Stomach (tissue), 19 donors: ENCODE measurements at regions of chr12 and their contacts with region 1.

Region 1: DNA sequence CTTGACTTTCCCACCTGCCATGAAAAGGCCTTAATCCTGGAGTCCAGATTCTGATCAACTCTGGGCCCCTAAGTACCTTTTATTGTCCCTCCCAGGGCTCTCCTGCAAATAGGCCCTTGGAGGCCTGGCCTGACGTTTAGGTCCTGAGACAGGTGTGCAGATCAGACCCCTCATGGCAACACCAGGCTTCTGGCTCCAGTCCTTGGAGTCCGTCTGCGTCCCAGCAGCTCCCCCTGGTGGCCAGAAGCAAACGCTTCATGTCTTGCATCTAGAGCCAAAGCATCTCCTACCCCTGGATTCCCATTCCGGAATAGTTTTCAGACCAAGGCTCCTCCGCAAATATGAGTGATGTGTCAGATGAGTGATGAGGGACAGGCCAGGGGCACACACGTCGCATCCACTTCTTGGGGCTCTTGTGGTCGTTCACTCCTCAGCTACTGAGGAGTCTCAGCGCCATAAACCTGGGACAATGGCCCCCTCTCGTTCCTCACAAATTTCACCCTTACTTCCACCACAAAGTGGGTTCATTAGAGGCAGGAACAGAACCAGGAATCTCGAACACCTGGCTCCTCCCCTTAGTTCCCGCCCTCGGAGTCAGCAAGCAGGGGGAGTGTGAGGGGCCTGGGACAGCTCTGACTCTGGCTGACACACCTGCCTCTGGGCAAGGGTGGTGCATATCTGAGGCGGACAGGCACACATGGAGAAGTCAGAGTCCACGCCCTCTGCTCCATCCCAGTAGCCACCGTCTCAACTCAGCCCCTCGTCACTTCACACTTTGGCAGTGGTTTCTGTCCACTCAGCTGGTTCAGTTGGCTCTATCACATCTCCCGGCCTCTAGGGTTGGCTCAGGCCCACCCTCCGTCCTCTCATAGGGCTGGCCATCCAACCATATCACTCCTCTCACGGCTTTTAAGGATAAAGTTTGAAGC is 77.9 kb upstream of the PWP1 start:
- DNase-seq: peak; percentile 80 to 93
- H3K4me3 ChIP-seq: no peak overlapping the region
- H3K27ac ChIP-seq: no peak overlapping the region
- H3K4me1 ChIP-seq: no peaks in the 10 kb centered on the region
- H3K27me3 ChIP-seq: peaks cover 0 to 17% (median 0%) of the 10 kb centered on the region in 3 donors
- CTCF ChIP-seq: peak in 5 of 7 experiments; percentile 69 to 94 (median 77)
- EP300 ChIP-seq: no peak
- POLR2A ChIP-seq: no peak

Region 2: DNA sequence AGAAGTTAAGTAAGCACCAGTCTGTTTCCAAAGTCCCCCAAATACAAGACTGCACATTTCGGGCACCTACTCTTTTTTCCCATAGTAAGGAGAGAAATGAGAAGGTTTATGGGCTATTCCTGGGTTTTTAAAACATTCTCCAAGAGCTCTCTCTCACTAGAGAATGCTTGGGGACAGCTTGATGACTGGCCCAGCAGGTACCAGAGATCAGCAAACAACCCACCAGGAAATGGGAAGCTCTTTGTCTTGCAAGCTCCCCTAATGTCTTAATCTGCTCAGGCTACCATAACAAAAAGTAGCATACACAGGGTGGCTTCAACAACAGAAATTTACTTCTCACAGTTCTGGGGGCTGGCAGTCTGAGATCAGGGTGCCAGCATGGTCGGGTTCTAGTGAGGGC is 472.6 kb before region 1 on chr12:
- intact Hi-C with region 1: loop called (anchors 5 kb)
- DNase-seq: no peak
- H3K4me3 ChIP-seq: no peak overlapping the region
- H3K27ac ChIP-seq: no peak overlapping the region
- H3K4me1 ChIP-seq: peaks cover 0 to 5% (median 0%) of the 10 kb centered on the region in 4 donors
- H3K27me3 ChIP-seq: no peaks in the 10 kb centered on the region
- CTCF ChIP-seq: no peak
- EP300 ChIP-seq: no peak
- POLR2A ChIP-seq: no peak